ENCODE measurements at regions of chr5 and their contacts with region 1.

Region 1: DNA sequence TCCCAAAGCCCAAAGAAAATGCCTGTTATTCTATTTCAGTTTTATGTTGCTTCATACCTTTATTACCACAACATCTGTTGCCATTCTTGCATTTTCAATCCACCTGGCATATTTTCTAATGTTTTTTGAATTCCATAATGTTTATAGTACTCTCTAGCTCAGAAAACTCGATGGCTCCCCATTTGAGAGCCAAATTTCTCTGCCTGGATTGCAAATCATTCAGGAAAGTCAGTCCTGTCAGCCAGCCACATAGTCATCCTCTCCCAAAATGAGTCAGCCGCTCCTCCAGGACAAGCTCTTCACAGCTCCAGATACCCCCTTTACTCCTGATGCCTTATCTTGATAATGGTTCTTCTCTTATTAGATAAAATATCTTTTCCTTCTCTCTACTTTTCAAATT is 78.2 kb upstream of the ADCY2 start:
- DNase-seq: no peak
- ATAC-seq: no peak
- H3K4me3 ChIP-seq: no peak overlapping the region
- H3K4me3 Mint-ChIP-seq: no peak overlapping the region
- H3K27ac ChIP-seq: no peak overlapping the region
- H3K27ac Mint-ChIP-seq: no peak overlapping the region
- H3K4me1 ChIP-seq: no peaks in the 10 kb centered on the region
- H3K4me1 Mint-ChIP-seq: no peaks in the 10 kb centered on the region
- H3K27me3 ChIP-seq: no peaks in the 10 kb centered on the region
- H3K27me3 Mint-ChIP-seq: no peaks in the 10 kb centered on the region
- CTCF ChIP-seq: no peak

Region 2: GRCh38 chr5:7015586-7016256 is 302.0 kb before region 1 on chr5:
- intact Hi-C with region 1: no loop called
- DNase-seq: no peak
- ATAC-seq: no peak
- H3K4me3 ChIP-seq: no peak overlapping the region
- H3K4me3 Mint-ChIP-seq: no peak overlapping the region
- H3K27ac ChIP-seq: no peak overlapping the region
- H3K27ac Mint-ChIP-seq: no peak overlapping the region
- H3K4me1 ChIP-seq: no peaks in the 10 kb centered on the region
- H3K4me1 Mint-ChIP-seq: no peaks in the 10 kb centered on the region
- H3K27me3 ChIP-seq: no peaks in the 10 kb centered on the region
- H3K27me3 Mint-ChIP-seq: no peaks in the 10 kb centered on the region
- CTCF ChIP-seq: no peak

Region 3: DNA sequence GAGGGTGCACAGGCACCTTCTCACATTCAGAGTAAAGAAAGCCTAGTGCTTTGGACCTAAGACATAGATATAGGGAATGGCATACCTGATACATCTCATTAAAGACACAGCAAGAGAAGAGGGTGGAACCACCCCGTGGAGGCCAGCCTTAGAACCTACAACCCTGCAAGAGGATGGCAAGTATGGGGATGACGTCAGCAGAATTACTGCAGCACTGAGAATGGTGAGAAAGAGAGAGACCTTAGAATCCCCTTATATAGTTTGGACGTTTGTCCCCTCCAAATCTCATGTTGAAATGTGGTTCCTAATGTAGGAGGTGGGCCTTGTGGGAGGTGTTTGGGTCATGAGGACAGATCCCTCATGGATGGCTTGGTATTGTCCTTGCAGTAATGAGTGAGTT is 50.0 kb after region 1 on chr5:
- intact Hi-C with region 1: loop called (anchors 2 kb)
- DNase-seq: no peak
- ATAC-seq: no peak
- H3K4me3 ChIP-seq: no peak overlapping the region
- H3K4me3 Mint-ChIP-seq: no peak overlapping the region
- H3K27ac ChIP-seq: no peak overlapping the region
- H3K27ac Mint-ChIP-seq: no peak overlapping the region
- H3K4me1 ChIP-seq: no peaks in the 10 kb centered on the region
- H3K4me1 Mint-ChIP-seq: no peaks in the 10 kb centered on the region
- H3K27me3 ChIP-seq: no peaks in the 10 kb centered on the region
- H3K27me3 Mint-ChIP-seq: no peaks in the 10 kb centered on the region
- CTCF ChIP-seq: no peak